ENCODE measurements at regions of chr6 and their contacts with region 1.

Region 1: DNA sequence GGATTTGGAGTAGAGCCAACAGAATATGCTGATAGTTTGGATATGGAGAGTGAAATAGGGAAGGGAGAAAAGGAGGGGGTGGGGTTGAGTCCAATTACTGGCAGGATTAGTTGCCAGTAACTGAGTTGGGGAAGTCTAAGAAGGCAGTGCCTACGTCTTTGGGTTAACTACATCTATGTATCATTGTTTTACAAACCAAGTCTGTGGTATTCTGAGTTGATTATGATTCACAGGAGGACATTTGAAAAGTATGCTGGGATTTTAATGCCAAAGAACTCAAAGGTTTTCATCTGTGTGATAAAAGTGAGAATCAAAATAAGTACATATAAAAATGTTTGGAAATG is 14.7 kb downstream of the DSE start:
- DNase-seq: no peak
- ATAC-seq: no peak
- H3K4me3 ChIP-seq: no peak overlapping the region
- H3K27ac ChIP-seq: no peak overlapping the region
- H3K4me1 ChIP-seq: no peaks in the 10 kb centered on the region
- H3K27me3 ChIP-seq: no peaks in the 10 kb centered on the region
- CTCF ChIP-seq: no peak
- EP300 ChIP-seq: no peak
- POLR2A ChIP-seq: no peak
- RAD21 ChIP-seq: no peak

Region 2: GRCh38 chr6:115404446-115404845 is 981.0 kb before region 1 on chr6:
- CTCF ChIA-PET with region 1: no interaction called
- POLR2A ChIA-PET with region 1: no interaction called
- in situ Hi-C with region 1: no loop called
- intact Hi-C with region 1: no loop called
- DNase-seq: no peak
- ATAC-seq: no peak
- H3K4me3 ChIP-seq: no peak overlapping the region
- H3K27ac ChIP-seq: no peak overlapping the region
- H3K4me1 ChIP-seq: no peaks in the 10 kb centered on the region
- H3K27me3 ChIP-seq: no peaks in the 10 kb centered on the region
- CTCF ChIP-seq: no peak
- EP300 ChIP-seq: no peak
- POLR2A ChIP-seq: no peak
- RAD21 ChIP-seq: no peak

Region 3: GRCh38 chr6:116335612-116336215 is 49.7 kb before region 1 on chr6:
- CTCF ChIA-PET with region 1: no interaction called
- POLR2A ChIA-PET with region 1: no interaction called
- in situ Hi-C with region 1: no loop called
- intact Hi-C with region 1: no loop called
- DNase-seq: no peak
- ATAC-seq: no peak
- H3K4me3 ChIP-seq: no peak overlapping the region
- H3K27ac ChIP-seq: no peak overlapping the region
- H3K4me1 ChIP-seq: no peaks in the 10 kb centered on the region
- H3K27me3 ChIP-seq: no peaks in the 10 kb centered on the region
- CTCF ChIP-seq: no peak
- EP300 ChIP-seq: no peak
- POLR2A ChIP-seq: no peak
- RAD21 ChIP-seq: no peak

Region 4: DNA sequence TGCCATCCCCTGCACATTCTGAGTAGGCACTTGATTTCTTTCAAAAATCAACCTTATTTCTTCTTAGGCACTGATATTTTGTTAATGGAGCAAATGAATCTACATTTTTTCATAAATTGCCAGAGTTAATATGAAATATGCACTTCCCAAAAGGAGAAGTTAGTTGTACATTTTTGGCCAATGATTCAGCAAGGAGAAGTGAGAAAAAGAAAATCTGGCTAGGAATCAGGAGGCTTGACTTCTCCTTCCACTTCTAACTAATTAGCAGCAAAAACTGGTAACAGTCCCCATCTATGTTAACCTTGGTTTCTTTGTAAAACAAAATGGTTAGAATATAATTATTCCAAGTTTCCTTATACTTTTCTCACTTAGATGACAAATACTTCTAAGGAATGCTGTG is 21.7 kb before region 1 on chr6:
- CTCF ChIA-PET with region 1: no interaction called
- POLR2A ChIA-PET with region 1: no interaction called
- in situ Hi-C with region 1: no loop called
- intact Hi-C with region 1: loop called (anchors 2 kb)
- DNase-seq: no peak
- ATAC-seq: no peak
- H3K4me3 ChIP-seq: no peak overlapping the region
- H3K27ac ChIP-seq: no peak overlapping the region
- H3K4me1 ChIP-seq: no peaks in the 10 kb centered on the region
- H3K27me3 ChIP-seq: peaks cover 0 to 3% of the 10 kb centered on the region in 2 experiments; a peak in 1 of 5 replicates
- CTCF ChIP-seq: no peak
- EP300 ChIP-seq: no peak
- POLR2A ChIP-seq: no peak
- RAD21 ChIP-seq: no peak